Activated T-helper 2 cell treated with anti-CD3 and anti-CD28 coated beads, Interferon-gamma antibody, Interleukin-2, Interleukin-4, amounts not matched to agents 10 μg/mL and 5 μg/mL and 100 μg/mL, durations not matched to agents 14 hours and 24 hours and 36 hours (primary cell): ENCODE measurements at regions of chr12 and their contacts with region 1.

Region 1: DNA sequence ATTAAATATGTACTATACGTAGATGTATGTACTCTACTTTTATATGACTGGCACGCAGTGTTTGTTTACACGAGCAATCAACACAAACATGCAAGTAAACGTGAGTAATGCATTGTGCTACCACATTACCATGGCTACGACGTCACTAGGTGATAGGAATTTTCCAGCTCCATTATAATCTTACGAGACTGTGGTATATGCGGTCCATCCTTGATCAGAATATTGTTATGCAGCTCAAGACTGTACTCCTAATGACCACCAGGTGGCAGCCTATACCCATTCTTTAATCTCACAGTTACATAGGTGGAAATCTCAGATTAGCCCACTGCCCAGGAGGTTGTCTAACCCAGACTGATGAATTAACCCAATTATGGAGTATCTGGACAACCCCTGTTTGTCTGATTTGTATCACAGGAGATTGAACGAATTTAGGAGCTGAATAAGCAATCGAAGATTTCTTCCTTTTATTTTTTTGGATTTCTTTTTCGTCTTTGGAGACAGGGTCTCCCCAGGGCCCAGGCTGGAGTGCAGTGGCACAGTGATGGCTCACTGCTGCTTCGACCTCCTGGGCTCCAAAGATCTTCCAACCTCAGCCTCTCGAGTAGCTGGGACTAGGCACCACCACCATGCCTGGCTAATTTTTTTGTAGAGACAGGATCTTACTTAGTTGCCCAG is 8.7 kb upstream of the TESPA1 start:
- DNase-seq: peak; percentile 45
- H3K4me3 Mint-ChIP-seq: no peak overlapping the region
- H3K27ac Mint-ChIP-seq: no peak overlapping the region
- H3K4me1 Mint-ChIP-seq: peaks cover 41% of the 10 kb centered on the region
- H3K27me3 Mint-ChIP-seq: no peaks in the 10 kb centered on the region

Region 2: GRCh38 chr12:54749191-54749818 is 244.0 kb before region 1 on chr12:
- intact Hi-C with region 1: loop called (anchors 1 kb)
- DNase-seq: no peak
- H3K4me3 Mint-ChIP-seq: no peak overlapping the region
- H3K27ac Mint-ChIP-seq: no peak overlapping the region
- H3K4me1 Mint-ChIP-seq: peaks cover 16% of the 10 kb centered on the region
- H3K27me3 Mint-ChIP-seq: peaks cover 17% of the 10 kb centered on the region

Region 3: DNA sequence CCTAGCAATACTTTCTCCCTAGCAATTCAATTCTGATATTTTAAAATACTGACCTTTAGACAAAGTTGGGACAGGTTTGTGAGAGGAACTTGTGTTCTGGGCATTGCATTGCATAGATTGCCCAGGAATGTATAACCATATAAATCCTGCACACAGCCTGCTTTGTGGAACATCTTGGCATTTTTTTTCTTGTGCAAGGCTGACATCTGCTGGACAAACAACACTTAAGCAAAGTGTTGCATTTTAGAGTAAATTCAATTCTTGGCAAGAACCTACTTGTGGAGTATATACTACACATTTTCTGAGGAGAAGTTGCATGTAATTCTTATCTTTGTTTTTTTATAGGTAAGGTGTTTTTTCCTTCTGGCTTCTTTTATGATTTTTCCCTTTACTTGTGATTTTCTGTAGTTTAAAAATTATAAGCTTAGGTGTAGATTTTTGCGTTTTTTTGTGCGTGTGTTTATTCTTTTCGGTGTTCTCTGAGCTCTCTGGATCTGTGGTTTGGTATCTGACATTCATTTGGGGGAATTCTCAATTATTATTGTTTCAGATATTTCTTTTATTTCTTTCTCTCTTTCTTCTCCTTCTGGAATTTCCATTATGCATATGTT is 35.1 kb before region 1 on chr12:
- intact Hi-C with region 1: loop called (anchors 5 kb)
- DNase-seq: no peak
- H3K4me3 Mint-ChIP-seq: peak overlapping the region; percentile 46
- H3K27ac Mint-ChIP-seq: peak overlapping the region; percentile 86
- H3K4me1 Mint-ChIP-seq: peaks cover 80% of the 10 kb centered on the region
- H3K27me3 Mint-ChIP-seq: no peaks in the 10 kb centered on the region

Region 4: DNA sequence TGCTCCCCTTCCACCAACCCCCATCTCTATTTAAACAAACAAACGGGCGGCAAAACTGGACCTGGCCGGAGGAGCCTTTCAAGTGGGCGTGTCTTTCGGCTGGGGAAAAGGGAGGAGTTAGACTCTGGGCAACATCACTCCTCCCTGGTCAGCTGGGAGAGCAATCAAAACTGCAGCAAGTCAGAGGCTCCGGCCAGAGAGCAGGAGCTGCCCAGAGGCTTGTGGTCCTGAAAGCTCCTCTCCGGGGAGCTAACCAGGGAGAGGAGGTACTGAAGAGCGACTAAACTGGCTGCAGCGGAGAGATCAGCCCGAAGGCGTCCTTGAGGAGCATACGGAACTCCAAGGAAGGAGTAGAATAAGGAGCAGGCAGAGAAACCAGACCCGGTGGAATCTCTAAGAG is 26.5 kb after region 1 on chr12 and contains the start of gene NEUROD4:
- intact Hi-C with region 1: no loop called
- DNase-seq: no peak
- H3K4me3 Mint-ChIP-seq: no peak within 1 kb of the TSS
- H3K27ac Mint-ChIP-seq: no peak within 1 kb of the TSS
- H3K4me1 Mint-ChIP-seq: peaks cover 5% of the 10 kb centered on the region
- H3K27me3 Mint-ChIP-seq: peaks cover 66% of the 10 kb centered on the region
- total RNA-seq, gene NEUROD4: not detected in 2 replicates

Region 5: GRCh38 chr12:55060470-55060869 is 67.2 kb after region 1 on chr12:
- intact Hi-C with region 1: loop called (anchors 1 kb)
- DNase-seq: peak; percentile 21
- H3K4me3 Mint-ChIP-seq: no peak overlapping the region
- H3K27ac Mint-ChIP-seq: peak overlapping the region; percentile 18
- H3K4me1 Mint-ChIP-seq: peaks cover 23% of the 10 kb centered on the region
- H3K27me3 Mint-ChIP-seq: peaks cover 19% of the 10 kb centered on the region

Region 6: GRCh38 chr12:55073043-55074022 is 80.0 kb after region 1 on chr12:
- intact Hi-C with region 1: loop called (anchors 1 kb)
- DNase-seq: peak; percentile 60
- H3K4me3 Mint-ChIP-seq: no peak overlapping the region
- H3K27ac Mint-ChIP-seq: no peak overlapping the region
- H3K4me1 Mint-ChIP-seq: peaks cover 10% of the 10 kb centered on the region
- H3K27me3 Mint-ChIP-seq: peaks cover 31% of the 10 kb centered on the region

Region 7: DNA sequence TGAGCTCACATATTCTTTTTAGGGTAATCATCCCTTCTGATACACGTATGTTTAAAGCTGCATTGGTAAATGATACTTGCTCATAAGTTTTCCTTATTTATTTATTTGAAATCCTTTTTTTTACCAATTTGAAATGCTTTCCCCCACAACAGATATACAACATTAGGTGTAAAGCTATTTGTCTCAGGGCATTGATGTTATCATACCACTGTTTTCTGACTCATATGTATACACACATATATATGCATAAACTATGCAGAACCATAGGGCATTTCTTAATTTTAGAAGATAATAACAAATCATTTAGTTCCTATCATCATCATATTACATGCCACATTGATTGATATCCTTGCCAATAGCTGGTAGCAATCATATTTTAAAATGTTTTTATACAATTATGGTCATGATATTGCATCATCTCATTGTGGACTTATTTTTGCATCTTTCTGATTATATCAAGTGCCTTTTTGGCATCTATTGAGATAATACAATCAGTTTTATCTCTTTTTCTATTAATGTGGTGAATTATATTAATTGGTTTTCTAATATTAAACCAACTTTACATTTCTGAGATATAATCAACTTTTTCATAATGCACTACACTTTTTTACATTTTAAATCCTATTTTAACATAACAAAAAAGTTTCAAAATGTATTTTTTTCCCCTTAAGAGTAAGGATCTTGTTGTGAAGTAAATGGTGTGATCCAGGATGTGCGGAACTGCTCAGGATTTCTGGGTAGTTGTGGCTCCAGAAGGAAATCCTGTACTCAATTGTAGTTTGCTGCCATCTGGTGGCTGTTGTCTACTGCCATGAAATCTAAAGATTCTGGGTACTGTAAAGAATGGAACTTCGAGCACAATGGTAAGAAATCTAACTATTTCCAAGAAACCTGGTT is 149.6 kb after region 1 on chr12:
- intact Hi-C with region 1: loop called (anchors 2 kb)
- DNase-seq: no peak
- H3K4me3 Mint-ChIP-seq: no peak overlapping the region
- H3K27ac Mint-ChIP-seq: no peak overlapping the region
- H3K4me1 Mint-ChIP-seq: no peaks in the 10 kb centered on the region
- H3K27me3 Mint-ChIP-seq: peaks cover 19% of the 10 kb centered on the region

Region 8: DNA sequence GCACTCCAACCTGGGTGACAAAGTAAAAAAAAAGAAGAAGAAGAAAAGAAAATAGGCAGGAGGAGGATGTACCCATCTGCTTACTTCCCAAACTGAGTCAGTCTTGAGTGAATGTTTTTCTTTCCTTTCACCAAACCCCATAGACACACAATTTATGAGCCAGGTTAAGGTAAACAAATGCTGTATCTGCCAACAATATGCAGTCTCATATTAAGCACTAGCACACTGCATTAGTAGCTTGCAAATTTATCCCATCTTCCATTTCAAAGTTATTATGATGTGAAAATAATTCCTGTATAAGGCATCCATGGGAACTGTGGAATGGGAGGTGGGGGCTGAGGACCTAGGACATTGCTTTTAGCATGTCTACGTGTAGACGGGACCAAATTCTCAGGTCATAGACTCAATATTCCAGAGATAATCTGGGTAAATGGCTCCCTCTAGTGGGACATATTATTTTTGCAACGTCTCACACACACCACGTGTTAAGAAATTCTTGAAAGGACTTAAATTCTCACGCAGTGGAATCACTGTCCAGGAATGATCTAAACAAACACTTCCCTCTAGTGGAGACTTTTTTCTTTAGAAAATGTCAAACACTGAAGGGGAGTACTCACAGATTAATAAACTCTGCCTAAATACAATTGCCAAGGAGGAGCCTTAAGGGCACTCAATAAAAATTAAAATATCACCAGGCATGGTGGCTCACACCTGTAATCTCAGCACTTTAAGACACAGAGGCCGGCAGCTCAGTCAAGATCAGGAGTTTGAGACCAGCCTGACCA is 626.2 kb after region 1 on chr12:
- intact Hi-C with region 1: loop called (anchors 10 kb)
- DNase-seq: peak; percentile 38
- H3K4me3 Mint-ChIP-seq: no peak overlapping the region
- H3K27ac Mint-ChIP-seq: no peak overlapping the region
- H3K4me1 Mint-ChIP-seq: peaks cover 5% of the 10 kb centered on the region
- H3K27me3 Mint-ChIP-seq: peaks cover 10% of the 10 kb centered on the region